ENCODE measurements at regions of chr11 and their contacts with region 1.

Region 1: DNA sequence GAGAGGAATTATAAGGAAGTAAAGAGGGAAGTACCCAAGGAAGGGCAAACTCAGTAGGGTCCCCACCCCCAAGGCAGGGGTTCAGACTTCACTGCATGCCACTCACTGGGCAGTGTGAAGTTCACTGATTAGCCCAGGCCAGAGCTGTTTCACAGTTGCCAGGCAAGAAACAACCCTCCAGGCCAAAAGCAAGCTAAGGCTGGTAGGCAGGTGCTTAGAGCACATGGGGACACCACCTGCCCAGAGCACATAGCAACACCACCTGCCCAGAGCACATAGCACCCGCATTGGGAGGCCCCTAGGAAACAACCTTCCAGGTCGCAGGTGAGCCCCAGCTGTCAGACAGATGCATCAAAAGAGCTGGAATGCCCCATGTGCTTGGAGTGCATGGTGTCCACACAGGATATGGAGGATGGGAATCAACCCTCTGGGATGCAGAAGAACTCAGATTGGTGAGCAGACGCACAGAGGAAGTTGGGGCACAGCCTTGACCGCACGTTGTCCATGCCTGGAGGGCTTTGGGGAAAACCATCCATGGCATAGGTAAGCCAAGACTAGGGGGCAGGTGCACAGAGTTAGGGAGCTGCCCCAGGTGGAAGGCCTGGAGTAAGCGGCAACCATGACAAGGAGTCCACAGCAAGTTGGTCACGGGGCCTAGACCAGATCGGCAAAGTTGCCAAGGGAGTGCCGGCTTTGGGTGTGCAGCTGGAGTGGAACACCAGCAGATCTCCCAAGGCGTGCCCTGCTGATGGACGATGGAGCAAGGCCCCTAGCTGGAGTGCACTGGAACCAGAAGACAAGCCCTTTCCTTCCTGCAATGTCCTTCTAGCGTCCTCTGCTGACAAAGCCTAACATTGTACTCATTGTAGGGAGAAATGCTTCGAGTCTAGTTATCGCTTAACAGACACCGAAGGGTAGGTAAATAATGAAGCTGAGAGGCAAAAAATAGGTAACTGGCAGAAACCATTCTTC is 7.8 kb upstream of the TMEM216 start:
- DNase-seq: no peak
- H3K4me3 ChIP-seq: no peak overlapping the region
- H3K27ac ChIP-seq: no peak overlapping the region
- H3K4me1 ChIP-seq: no peaks in the 10 kb centered on the region
- H3K27me3 ChIP-seq: no peaks in the 10 kb centered on the region
- CTCF ChIP-seq: peak in 1 of 4 experiments; percentile 4
- POLR2A ChIP-seq: no peak

Region 2: DNA sequence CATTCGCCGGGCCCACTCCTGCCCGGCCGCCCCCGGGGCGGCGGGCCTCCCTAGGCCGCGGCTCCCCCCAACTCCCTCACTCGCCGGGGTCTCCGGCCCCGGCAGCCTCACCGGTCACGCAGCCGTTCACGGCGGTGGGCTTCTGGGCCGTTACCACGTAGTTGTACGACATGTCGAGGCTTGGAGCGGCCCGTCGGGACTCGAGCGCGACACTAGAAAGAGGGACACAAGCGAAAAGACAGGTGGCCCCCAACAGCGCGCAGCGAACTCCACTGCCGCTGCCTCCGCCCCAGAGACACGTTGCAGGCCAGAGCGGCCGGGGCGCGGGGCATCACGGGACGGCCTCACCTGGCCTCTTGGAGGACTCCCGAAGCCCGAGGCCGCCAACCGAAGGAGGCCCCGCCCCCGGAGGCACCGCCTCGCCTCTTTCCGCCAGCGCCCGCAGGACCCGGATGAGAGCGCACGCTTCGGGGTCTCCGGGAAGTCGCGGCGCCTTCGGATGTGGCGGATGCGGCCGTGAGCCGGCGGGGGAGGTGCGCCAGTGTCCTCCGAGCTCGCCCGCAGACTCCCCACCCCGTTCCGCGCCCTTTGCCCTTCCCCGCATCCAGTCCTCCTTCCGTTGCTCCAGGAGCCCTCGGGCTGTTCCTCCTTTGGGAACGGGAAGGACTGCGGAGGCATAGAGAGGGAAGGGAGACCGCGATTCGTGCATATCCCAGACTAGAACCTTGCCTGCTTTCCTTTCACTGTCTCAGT is 51.6 kb before region 1 on chr11 and contains the starts of genes DDB1 and TKFC:
- intact Hi-C with region 1: loop called (anchors 2 kb)
- DNase-seq: peak; percentile 95
- H3K4me3 ChIP-seq: peak within 1 kb of the TSS; percentile 93 to 95
- H3K27ac ChIP-seq: peak within 1 kb of the TSS; percentile 82 to 84
- H3K4me1 ChIP-seq: no peaks in the 10 kb centered on the region
- H3K27me3 ChIP-seq: no peaks in the 10 kb centered on the region
- CTCF ChIP-seq: peak in 2 of 4 experiments; percentile 10 to 16
- POLR2A ChIP-seq: peak; percentile 83
- total RNA-seq, gene DDB1: 179 to 253 TPM
- total RNA-seq, gene TKFC: 52.8 to 79.3 TPM

Region 3: DNA sequence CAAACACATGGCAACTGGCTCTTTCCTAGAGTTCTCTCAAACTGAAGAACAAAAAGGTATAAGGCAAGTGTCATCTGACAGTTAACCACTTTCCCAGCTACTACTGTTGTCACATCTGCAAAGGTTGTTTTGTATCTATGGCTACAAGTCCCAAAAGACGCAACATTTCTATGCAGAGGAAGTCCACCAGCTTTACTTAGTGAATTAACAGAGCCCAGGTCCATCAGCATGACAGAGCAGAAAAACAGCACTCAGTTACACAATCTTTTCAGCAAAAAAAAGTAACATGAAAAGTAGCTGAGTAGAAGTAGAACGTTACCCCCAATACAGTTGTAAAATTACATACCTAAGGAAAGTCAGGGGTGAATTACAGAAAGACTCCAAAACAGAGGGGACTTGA is 33.1 kb after region 1 on chr11:
- intact Hi-C with region 1: no loop called
- DNase-seq: no peak
- H3K4me3 ChIP-seq: no peak overlapping the region
- H3K27ac ChIP-seq: no peak overlapping the region
- H3K4me1 ChIP-seq: no peaks in the 10 kb centered on the region
- H3K27me3 ChIP-seq: no peaks in the 10 kb centered on the region
- CTCF ChIP-seq: no peak
- POLR2A ChIP-seq: no peak

Region 4: DNA sequence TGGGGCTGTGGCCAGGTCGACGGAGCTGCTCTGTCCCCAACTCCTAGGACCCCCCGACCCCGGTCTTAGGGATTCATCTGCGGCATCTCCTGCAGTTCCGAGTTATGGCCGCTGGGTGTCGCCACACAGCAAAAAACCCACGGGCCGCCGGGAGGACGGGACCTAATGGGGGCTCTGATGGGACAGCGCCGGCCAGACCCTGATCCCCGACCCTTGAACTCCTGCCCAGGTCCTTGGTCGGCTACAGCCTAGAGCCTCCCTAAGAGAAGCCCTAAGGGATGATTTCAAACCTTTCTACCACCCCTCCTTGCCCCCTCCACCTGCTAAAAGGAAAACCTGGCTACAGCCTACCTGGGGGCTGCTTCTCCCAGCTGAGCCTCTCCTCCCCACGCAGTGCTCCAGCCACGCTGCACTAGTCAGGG is 93.2 kb after region 1 on chr11:
- intact Hi-C with region 1: no loop called
- DNase-seq: peak; percentile 22
- H3K4me3 ChIP-seq: no peak overlapping the region
- H3K27ac ChIP-seq: no peak overlapping the region
- H3K4me1 ChIP-seq: no peaks in the 10 kb centered on the region
- H3K27me3 ChIP-seq: no peaks in the 10 kb centered on the region
- CTCF ChIP-seq: peak; percentile 88 to 97 (median 90)
- POLR2A ChIP-seq: no peak